ENCODE measurements at regions of chr22 and their contacts with region 1.

Region 1: GRCh38 chr22:39462443-39463221 is 5.8 kb downstream of the MGAT3 start:
- DNase-seq: no peak
- H3K4me3 ChIP-seq: no peak overlapping the region
- H3K27ac ChIP-seq: no peak overlapping the region
- H3K4me1 ChIP-seq: peaks cover 0 to 5% (median 0%) of the 10 kb centered on the region in 4 experiments; a peak in 3 of 7 replicates
- H3K27me3 ChIP-seq: peaks cover 1 to 10% (median 7%) of the 10 kb centered on the region in 4 experiments; a peak in 6 of 7 replicates
- CTCF ChIP-seq: peak; percentile 38 to 57 (median 52)
- EP300 ChIP-seq: no peak
- POLR2A ChIP-seq: no peak
- RAD21 ChIP-seq: peak; percentile 73 to 77

Region 2: DNA sequence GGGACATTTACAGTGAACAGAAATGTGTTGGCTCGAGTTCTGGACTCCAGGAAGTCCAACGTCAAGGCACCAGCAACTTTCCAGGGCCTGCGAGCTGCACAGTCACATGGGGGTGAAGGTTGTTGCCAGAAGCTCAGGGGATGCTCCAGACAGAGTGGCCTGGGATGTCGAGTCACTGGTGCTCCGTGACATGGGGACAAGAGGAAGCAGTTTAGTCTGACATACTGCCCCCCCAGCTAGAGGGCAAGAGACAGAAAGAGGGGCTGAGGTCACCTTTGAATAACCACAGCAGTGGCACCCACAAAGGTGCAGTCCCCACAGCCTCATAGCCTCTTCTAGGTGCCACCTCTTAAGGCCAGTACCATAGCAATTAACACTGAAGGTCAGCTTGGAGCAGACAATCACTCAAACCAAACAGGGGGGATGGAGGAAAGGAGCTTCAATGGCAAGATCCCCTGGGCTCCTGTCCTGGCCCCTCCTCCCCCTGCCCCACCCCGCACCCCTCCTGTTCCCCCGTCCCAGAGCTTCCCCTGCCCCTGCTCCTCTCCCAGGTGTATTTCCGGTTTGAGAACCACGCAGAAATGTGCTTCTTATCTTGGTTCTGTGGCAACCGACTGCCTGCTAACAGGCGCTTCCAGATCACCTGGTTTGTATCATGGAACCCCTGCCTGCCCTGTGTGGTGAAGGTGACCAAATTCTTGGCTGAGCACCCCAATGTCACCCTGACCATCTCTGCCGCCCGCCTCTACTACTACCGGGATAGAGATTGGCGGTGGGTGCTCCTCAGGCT is 437.9 kb before region 1 on chr22:
- CTCF ChIA-PET with region 1: no interaction called
- POLR2A ChIA-PET with region 1: no interaction called
- DNase-seq: no peak
- H3K4me3 ChIP-seq: no peak overlapping the region
- H3K27ac ChIP-seq: no peak overlapping the region
- H3K4me1 ChIP-seq: peaks cover 0 to 17% (median 3%) of the 10 kb centered on the region in 4 experiments; a peak in 2 of 7 replicates
- H3K27me3 ChIP-seq: no peaks in the 10 kb centered on the region
- CTCF ChIP-seq: no peak
- EP300 ChIP-seq: no peak
- POLR2A ChIP-seq: no peak
- RAD21 ChIP-seq: no peak

Region 3: DNA sequence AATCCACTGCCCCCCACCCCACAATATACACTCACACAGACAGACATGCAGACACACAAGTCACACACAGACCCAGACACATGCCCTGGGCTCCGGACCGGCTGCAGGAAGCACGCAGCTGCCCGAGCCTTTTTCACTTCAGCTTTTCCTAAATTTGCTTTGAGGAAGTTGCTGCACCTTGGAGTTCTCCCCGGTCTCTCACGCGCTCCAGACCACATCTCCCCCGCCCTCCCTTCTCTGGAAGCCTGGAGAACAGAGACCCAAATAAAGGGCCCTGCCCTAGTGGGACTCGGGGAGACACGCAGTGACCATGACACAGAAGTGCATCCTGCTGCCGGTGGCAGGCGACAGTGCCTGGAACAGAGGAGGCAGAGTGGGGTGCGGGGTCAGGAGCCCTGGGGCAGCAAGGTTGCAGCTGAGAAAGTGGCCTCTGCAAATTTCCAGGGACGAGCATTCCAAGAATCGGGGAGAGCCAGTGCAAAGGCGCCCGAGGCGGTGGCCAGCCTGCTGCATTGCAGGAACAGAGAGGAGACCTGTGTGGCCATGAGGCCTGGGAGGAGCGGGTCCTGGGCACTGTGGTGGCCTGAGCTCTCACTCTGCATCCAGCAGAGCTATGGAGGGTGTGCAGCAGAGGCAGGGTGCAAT is 162.3 kb before region 1 on chr22:
- CTCF ChIA-PET with region 1: no interaction called
- POLR2A ChIA-PET with region 1: no interaction called
- DNase-seq: no peak
- H3K4me3 ChIP-seq: no peak overlapping the region
- H3K27ac ChIP-seq: no peak overlapping the region
- H3K4me1 ChIP-seq: peaks cover 2 to 24% (median 7%) of the 10 kb centered on the region in 4 experiments
- H3K27me3 ChIP-seq: no peaks in the 10 kb centered on the region; a peak in 1 of 7 replicates
- CTCF ChIP-seq: no peak
- EP300 ChIP-seq: no peak
- POLR2A ChIP-seq: no peak
- RAD21 ChIP-seq: peak in 1 of 2 experiments; percentile 11; a peak in 2 of 4 replicates

Region 4: GRCh38 chr22:39446295-39446721 is 16.3 kb before region 1 on chr22:
- CTCF ChIA-PET with region 1: interaction called, 18 read pairs
- POLR2A ChIA-PET with region 1: interaction called, 4 read pairs
- DNase-seq: peak in 1 of 2 experiments; percentile 69
- H3K4me3 ChIP-seq: no peak overlapping the region
- H3K27ac ChIP-seq: no peak overlapping the region
- H3K4me1 ChIP-seq: peaks cover 0 to 8% (median 6%) of the 10 kb centered on the region in 4 experiments; a peak in 6 of 7 replicates
- H3K27me3 ChIP-seq: no peaks in the 10 kb centered on the region; a peak in 2 of 7 replicates
- CTCF ChIP-seq: peak in 2 of 3 experiments; percentile 14 to 30; a peak in 3 of 4 replicates
- EP300 ChIP-seq: no peak
- POLR2A ChIP-seq: no peak
- RAD21 ChIP-seq: peak in 1 of 2 experiments; percentile 26; a peak in 2 of 4 replicates